SK-N-SH (cell line): ENCODE measurements at regions of chrX and their contacts with region 1.

Region 1: DNA sequence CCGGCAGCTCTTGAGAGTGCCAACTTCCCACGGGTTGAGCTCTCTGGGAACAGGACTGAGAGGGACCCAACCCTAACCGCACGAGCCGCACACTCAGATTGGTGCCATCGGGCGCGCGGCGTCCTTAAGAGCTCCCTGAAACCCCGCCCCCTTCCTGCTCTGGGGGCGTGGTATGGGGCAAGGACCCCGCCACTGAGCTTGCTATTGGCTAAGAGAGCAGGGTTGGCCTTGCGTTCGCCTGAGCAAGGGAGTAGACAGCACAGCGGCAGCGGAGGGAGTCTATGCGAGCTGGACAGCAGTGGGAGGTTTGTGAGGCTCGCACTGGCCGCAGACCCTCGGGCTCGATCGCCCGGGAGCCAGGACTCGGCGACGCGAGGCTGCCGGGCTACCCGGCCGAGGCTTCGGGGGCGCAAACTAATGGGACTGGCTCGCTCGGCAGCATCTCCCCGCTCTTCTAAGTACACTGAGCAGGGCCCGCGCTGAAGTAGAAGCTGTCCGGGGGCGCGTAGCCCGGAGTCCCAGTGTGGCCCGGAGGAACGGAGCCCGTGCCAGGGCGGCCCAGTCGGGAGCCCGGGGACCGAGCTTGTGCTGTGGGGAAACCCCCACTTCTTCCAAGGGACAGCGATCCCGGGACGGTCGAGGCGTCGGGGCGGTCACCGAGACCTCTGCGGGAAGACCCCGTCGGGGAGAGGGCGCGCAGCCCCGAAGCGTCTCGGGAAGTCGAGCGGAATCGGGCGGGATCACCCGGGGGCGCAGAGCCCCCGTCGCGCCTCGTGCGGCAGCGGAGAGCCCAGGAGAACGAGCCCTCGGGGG is at the start of gene EFNB1:
- DNase-seq: peak; percentile 87
- H3K4me3 ChIP-seq: peak within 1 kb of the TSS; percentile 61 to 62
- H3K27ac ChIP-seq: peak within 1 kb of the TSS in 1 of 2 experiments; percentile 58; a peak in 1 of 4 replicates
- H3K4me1 ChIP-seq: peaks cover 0 to 9% of the 10 kb centered on the region in 2 experiments; a peak in 1 of 4 replicates
- H3K27me3 ChIP-seq: peaks cover 15% of the 10 kb centered on the region; the same call in 1 of the 2 replicates
- CTCF ChIP-seq: no peak
- EP300 ChIP-seq: no peak
- RAD21 ChIP-seq: peak; percentile 3; the same call in 1 of the 2 replicates
- polyA plus RNA-seq, gene EFNB1: 7.5 and 8.4 TPM in 2 replicates

Region 2: DNA sequence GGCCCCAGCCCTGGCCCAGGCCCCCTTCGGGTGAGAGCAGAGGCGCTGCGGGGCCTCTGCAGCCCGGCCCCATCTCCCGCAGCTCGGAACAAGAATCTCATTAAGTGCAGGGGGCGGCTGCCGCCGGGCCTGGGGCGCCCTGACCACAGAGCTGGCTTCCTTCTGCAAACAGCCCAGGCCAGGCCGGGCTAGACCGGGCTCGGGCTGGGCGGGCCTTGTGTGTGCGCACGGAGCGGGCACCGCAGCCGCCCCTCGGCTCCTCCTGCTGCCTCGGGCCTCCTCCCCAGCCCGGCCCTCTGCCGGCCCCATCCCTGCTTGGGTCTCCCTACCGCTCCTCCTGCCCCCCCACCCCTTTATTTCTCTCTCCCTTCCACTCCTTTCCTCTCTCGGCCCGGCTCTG is 83.2 kb after region 1 on chrX:
- CTCF ChIA-PET with region 1: interaction called, 52 read pairs
- POLR2A ChIA-PET with region 1: interaction called, 4 read pairs
- DNase-seq: no peak
- H3K4me3 ChIP-seq: no peak overlapping the region
- H3K27ac ChIP-seq: no peak overlapping the region
- H3K4me1 ChIP-seq: peaks cover 0 to 12% of the 10 kb centered on the region in 2 experiments; a peak in 1 of 4 replicates
- H3K27me3 ChIP-seq: peaks cover 28% of the 10 kb centered on the region
- CTCF ChIP-seq: no peak
- EP300 ChIP-seq: no peak
- RAD21 ChIP-seq: no peak

Region 3: GRCh38 chrX:69060631-69061408 is 231.9 kb after region 1 on chrX:
- CTCF ChIA-PET with region 1: interaction called, 29 read pairs
- POLR2A ChIA-PET with region 1: interaction called, 10 read pairs
- DNase-seq: no peak
- H3K4me3 ChIP-seq: no peak overlapping the region
- H3K27ac ChIP-seq: no peak overlapping the region
- H3K4me1 ChIP-seq: peaks cover 0 to 4% of the 10 kb centered on the region in 2 experiments; a peak in 1 of 4 replicates
- H3K27me3 ChIP-seq: no peaks in the 10 kb centered on the region
- CTCF ChIP-seq: peak; percentile 36
- EP300 ChIP-seq: no peak
- RAD21 ChIP-seq: peak; percentile 69

Region 4: DNA sequence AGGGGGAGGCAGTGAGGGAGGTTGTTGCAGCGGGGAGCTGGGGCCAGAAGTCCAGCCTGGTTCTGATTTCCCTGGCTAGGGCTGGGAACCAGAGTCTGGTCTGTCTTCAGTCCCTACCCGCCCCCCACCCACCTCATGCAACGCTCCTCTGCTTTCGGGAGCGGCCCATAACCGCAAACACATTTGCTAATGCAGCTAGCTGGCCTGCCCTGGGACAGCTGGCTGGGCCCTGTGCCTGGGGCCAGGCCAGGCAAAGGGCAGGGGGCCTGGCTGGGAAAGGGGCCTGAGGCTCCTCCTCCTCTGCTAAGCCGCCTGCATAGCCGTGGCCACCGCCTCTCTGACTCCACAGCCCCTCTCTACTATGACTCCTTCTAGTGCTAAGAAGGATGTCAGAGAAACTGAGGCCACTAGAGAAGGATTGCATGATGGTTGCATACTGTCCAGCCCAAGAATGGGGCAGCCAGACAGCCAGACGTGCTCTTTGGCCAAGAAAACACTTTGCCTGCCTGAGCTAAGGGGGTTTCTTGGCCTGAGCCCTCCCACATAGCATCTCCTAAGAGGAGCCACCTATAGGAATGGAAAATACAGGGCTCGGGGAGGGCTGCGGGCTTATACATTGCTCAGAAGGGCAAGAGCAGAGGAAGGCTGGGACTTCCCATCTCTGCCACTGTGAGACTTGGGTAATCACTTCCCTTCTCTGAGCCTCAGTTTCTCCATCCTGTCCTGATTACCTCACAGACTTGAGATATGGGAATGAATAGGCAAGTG is 259.4 kb after region 1 on chrX:
- CTCF ChIA-PET with region 1: interaction called, 36 read pairs
- POLR2A ChIA-PET with region 1: no interaction called
- DNase-seq: peak; percentile 62
- H3K4me3 ChIP-seq: no peak overlapping the region
- H3K27ac ChIP-seq: peak overlapping the region in 1 of 2 experiments; percentile 44; a peak in 1 of 4 replicates
- H3K4me1 ChIP-seq: peaks cover 0 to 23% of the 10 kb centered on the region in 2 experiments; a peak in 1 of 4 replicates
- H3K27me3 ChIP-seq: peaks cover 24% of the 10 kb centered on the region; the same call in 1 of the 2 replicates
- CTCF ChIP-seq: no peak
- EP300 ChIP-seq: peak in 1 of 2 experiments; percentile 28; a peak in 1 of 4 replicates
- RAD21 ChIP-seq: 0 out of 2 replicates have a peak, but pooled peaks have one; percentile 3

Region 5: GRCh38 chrX:69222103-69223090 is 393.5 kb after region 1 on chrX:
- CTCF ChIA-PET with region 1: interaction called, 95 read pairs
- POLR2A ChIA-PET with region 1: interaction called, 26 read pairs
- DNase-seq: peak; percentile 90
- H3K4me3 ChIP-seq: no peak overlapping the region
- H3K27ac ChIP-seq: no peak overlapping the region
- H3K4me1 ChIP-seq: no peaks in the 10 kb centered on the region
- H3K27me3 ChIP-seq: peaks cover 5% of the 10 kb centered on the region
- CTCF ChIP-seq: peak; percentile 81
- EP300 ChIP-seq: no peak
- RAD21 ChIP-seq: peak; percentile 93

Region 6: DNA sequence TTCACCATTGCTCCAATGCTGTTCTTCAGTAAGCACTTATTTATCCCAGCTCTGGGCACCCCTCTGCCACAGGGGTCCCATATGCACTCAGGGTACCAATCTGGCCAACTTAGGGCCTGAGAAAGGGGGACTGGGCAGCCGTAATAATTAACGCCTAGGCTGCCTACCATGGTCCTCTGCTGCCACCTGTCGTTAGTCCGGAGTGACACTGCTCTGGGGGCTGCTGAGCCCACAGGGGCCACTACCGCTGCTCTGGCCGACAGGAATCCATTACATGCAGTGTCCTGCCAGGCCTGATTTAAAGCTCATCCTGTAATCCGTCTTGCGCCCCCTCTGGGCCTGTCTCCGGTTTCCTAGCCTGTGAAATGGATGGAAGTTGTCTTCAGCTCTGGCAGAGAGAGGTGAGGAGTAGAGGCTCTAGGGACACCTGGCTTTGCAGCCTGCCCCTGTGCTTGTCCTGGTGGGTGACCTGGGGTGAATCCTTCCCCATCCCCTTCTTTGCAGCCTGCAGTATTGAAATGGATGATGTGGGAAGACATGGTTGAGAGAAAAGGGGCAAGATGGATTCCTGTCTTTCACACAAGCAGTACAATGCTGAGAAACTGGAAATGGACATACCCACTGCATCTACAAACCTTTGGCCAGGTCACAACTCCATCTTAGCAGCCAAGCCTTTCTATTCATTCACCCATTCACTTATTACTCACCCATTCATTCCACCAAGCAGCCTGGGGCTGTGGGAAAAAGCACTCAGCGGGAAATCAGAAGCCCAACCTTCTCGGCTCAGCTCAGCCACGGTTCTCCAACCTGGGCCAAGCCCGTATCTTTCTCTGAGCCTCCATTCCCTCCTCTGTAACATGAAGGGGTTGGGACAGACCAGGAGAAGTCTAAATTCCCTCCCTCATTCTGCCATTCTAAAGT is 558.9 kb after region 1 on chrX:
- CTCF ChIA-PET with region 1: interaction called, 20 read pairs
- POLR2A ChIA-PET with region 1: interaction called, 6 read pairs
- DNase-seq: peak; percentile 78
- H3K4me3 ChIP-seq: peak overlapping the region in 1 of 2 experiments; percentile 39; a peak in 1 of 4 replicates
- H3K27ac ChIP-seq: no peak overlapping the region
- H3K4me1 ChIP-seq: peaks cover 0 to 24% of the 10 kb centered on the region in 2 experiments; a peak in 2 of 4 replicates
- H3K27me3 ChIP-seq: peaks cover 34% of the 10 kb centered on the region; the same call in 1 of the 2 replicates
- CTCF ChIP-seq: peak; percentile 84
- EP300 ChIP-seq: no peak
- RAD21 ChIP-seq: peak; percentile 82